SK-N-SH (cell line): ENCODE measurements at regions of chr5 and their contacts with region 1.

Region 1: GRCh38 chr5:140244525-140245025 is 58.3 kb downstream of the PFDN1 start:
- DNase-seq: peak; percentile 83
- H3K4me3 ChIP-seq: peak overlapping the region in 1 of 2 experiments; percentile 29; a peak in 1 of 4 replicates
- H3K27ac ChIP-seq: peak overlapping the region in 1 of 2 experiments; percentile 94; a peak in 2 of 4 replicates
- H3K4me1 ChIP-seq: peaks cover 44 to 53% of the 10 kb centered on the region in 2 experiments
- H3K27me3 ChIP-seq: no peaks in the 10 kb centered on the region
- CTCF ChIP-seq: peak; percentile 88
- EP300 ChIP-seq: no peak
- RAD21 ChIP-seq: peak; percentile 91

Region 2: GRCh38 chr5:139725073-139725830 is 519.3 kb before region 1 on chr5:
- CTCF ChIA-PET with region 1: no interaction called
- POLR2A ChIA-PET with region 1: no interaction called
- DNase-seq: peak; percentile 85
- H3K4me3 ChIP-seq: no peak overlapping the region
- H3K27ac ChIP-seq: peak overlapping the region; percentile 66 to 83; a peak in 3 of 4 replicates
- H3K4me1 ChIP-seq: peaks cover 12 to 17% of the 10 kb centered on the region in 2 experiments; a peak in 3 of 4 replicates
- H3K27me3 ChIP-seq: no peaks in the 10 kb centered on the region
- CTCF ChIP-seq: no peak
- EP300 ChIP-seq: peak; percentile 74 to 93
- RAD21 ChIP-seq: peak; percentile 21; the same call in 1 of the 2 replicates

Region 3: GRCh38 chr5:140169410-140169809 is 75.2 kb before region 1 on chr5:
- CTCF ChIA-PET with region 1: interaction called, 15 read pairs
- POLR2A ChIA-PET with region 1: no interaction called
- DNase-seq: no peak
- H3K4me3 ChIP-seq: no peak overlapping the region
- H3K27ac ChIP-seq: peak overlapping the region in 1 of 2 experiments; percentile 53; a peak in 1 of 4 replicates
- H3K4me1 ChIP-seq: peaks cover 5% of the 10 kb centered on the region in 2 experiments; a peak in 3 of 4 replicates
- H3K27me3 ChIP-seq: no peaks in the 10 kb centered on the region
- CTCF ChIP-seq: peak; percentile 29; the same call in 1 of the 2 replicates
- EP300 ChIP-seq: no peak
- RAD21 ChIP-seq: peak; percentile 50

Region 4: GRCh38 chr5:140216478-140217074 is 28.0 kb before region 1 on chr5:
- CTCF ChIA-PET with region 1: interaction called, 10 read pairs
- POLR2A ChIA-PET with region 1: no interaction called
- DNase-seq: no peak
- H3K4me3 ChIP-seq: no peak overlapping the region
- H3K27ac ChIP-seq: no peak overlapping the region
- H3K4me1 ChIP-seq: peaks cover 22 to 41% of the 10 kb centered on the region in 2 experiments
- H3K27me3 ChIP-seq: no peaks in the 10 kb centered on the region
- CTCF ChIP-seq: no peak
- EP300 ChIP-seq: no peak
- RAD21 ChIP-seq: no peak

Region 5: GRCh38 chr5:140261403-140262171 is 17.0 kb after region 1 on chr5:
- CTCF ChIA-PET with region 1: interaction called, 17 read pairs
- POLR2A ChIA-PET with region 1: no interaction called
- DNase-seq: no peak
- H3K4me3 ChIP-seq: no peak overlapping the region
- H3K27ac ChIP-seq: peak overlapping the region in 1 of 2 experiments; percentile 79; a peak in 2 of 4 replicates
- H3K4me1 ChIP-seq: peaks cover 7 to 24% of the 10 kb centered on the region in 2 experiments; a peak in 3 of 4 replicates
- H3K27me3 ChIP-seq: no peaks in the 10 kb centered on the region
- CTCF ChIP-seq: peak; percentile 38
- EP300 ChIP-seq: no peak
- RAD21 ChIP-seq: no peak

Region 6: DNA sequence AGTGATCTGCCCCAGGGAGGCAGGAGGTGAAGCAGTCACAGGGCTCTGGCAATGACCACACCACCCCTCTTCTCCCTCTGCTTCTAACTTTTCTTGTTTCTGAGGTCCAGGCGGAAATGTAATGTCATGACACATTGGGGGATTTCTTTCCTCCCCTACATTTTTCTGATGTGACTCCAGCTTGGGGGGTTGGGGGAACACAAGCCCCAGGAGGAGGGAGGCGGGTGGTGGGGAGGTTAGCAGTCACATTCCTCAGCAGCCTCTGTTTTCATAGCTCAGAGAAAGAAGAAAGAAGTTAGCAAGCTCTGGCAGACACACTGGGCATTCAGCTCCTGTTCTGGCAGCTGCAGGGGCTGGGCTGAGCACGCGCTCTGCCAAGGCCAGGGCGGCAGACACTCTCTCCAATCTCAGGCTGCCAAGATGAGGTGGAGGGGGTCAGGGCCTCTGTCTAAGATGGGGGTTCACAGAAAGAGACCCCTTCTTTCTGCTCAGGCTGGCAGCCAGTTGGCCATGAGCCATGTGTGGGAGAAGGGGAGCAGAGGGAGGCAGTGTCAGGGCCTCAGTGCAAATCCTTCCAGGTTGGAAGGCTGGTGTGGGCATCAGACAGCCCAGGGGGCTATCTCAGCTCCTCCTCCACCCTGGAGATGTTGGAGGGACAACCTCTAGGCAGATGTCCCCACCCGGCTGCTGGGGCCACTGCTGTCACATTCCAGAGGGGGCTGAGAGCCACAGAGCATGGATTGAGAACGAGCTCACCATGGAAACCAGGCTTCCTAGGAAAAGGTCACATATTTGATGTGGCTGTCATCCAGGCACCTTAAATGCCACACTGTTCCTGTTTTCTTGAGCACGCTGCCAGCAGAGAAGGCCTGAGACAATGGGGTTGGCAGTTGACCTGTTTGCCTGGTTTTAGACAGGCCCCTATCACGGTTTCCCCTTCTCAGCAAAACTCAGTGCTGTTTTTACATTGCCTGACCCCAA is 78.5 kb after region 1 on chr5:
- CTCF ChIA-PET with region 1: interaction called, 15 read pairs
- POLR2A ChIA-PET with region 1: no interaction called
- DNase-seq: no peak
- H3K4me3 ChIP-seq: no peak overlapping the region
- H3K27ac ChIP-seq: peak overlapping the region; percentile 32 to 94; a peak in 3 of 4 replicates
- H3K4me1 ChIP-seq: peaks cover 7 to 33% of the 10 kb centered on the region in 2 experiments; a peak in 3 of 4 replicates
- H3K27me3 ChIP-seq: no peaks in the 10 kb centered on the region
- CTCF ChIP-seq: no peak
- EP300 ChIP-seq: peak in 1 of 2 experiments; percentile 94; a peak in 2 of 4 replicates
- RAD21 ChIP-seq: no peak

Region 7: GRCh38 chr5:140346348-140347101 is 102.0 kb after region 1 on chr5 and contains the start of gene HBEGF:
- CTCF ChIA-PET with region 1: interaction called, 418 read pairs
- POLR2A ChIA-PET with region 1: interaction called, 13 read pairs
- DNase-seq: peak; percentile 96
- H3K4me3 ChIP-seq: peak within 1 kb of the TSS; percentile 72 to 86
- H3K27ac ChIP-seq: peak within 1 kb of the TSS; percentile 55 to 75; a peak in 3 of 4 replicates
- H3K4me1 ChIP-seq: peaks cover 12 to 32% of the 10 kb centered on the region in 2 experiments
- H3K27me3 ChIP-seq: no peaks in the 10 kb centered on the region
- CTCF ChIP-seq: peak; percentile 43
- EP300 ChIP-seq: no peak
- RAD21 ChIP-seq: no peak
- polyA plus RNA-seq, gene HBEGF: 56.2 and 59.8 TPM in 2 replicates